Aorta (tissue), 5 donors: ENCODE measurements at regions of chr20 and their contacts with region 1.

Region 1: DNA sequence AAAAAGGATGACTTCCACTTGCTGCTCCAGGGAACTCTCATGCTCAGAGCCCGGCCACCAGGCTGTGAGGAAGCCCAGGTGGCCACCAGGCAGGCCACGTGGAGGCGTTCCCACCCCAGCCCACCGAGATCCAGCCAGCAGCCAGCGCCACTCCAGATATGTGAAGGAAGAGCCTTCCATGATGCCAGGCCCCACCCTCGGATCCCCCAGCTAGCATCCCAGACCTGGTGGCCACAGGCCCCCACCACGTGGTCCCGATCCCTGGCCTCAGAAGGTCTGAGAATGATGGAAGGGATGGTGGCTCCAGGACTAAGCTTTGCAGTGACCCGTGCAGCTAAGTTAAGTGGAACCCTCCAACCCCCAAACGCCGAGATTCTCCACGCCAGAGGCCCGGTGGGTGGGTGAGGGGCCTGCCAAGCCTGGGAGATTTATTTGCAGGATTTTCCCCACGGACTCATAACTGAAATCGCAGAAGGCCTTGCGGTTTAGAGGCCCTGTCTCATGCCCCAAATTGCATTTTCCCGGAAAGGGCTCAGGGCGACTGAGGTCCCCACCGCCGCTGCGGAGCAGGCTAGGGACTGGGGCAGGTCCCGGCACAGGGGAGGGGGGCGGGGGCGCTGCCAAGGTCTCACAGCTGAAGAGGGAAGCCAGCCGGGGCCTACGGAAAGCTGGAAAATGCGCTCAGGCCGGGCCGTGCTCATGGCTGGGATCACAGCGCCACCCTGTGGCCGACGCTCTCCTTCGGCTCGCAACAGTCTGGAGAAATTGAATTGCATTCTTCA is 31.1 kb upstream of the CST7 start:
- DNase-seq: peak; percentile 79 to 90
- ATAC-seq: peak; percentile 94
- H3K4me3 ChIP-seq: no peak overlapping the region
- H3K27ac ChIP-seq: no peak overlapping the region
- H3K4me1 ChIP-seq: no peaks in the 10 kb centered on the region
- H3K27me3 ChIP-seq: no peaks in the 10 kb centered on the region

Region 2: DNA sequence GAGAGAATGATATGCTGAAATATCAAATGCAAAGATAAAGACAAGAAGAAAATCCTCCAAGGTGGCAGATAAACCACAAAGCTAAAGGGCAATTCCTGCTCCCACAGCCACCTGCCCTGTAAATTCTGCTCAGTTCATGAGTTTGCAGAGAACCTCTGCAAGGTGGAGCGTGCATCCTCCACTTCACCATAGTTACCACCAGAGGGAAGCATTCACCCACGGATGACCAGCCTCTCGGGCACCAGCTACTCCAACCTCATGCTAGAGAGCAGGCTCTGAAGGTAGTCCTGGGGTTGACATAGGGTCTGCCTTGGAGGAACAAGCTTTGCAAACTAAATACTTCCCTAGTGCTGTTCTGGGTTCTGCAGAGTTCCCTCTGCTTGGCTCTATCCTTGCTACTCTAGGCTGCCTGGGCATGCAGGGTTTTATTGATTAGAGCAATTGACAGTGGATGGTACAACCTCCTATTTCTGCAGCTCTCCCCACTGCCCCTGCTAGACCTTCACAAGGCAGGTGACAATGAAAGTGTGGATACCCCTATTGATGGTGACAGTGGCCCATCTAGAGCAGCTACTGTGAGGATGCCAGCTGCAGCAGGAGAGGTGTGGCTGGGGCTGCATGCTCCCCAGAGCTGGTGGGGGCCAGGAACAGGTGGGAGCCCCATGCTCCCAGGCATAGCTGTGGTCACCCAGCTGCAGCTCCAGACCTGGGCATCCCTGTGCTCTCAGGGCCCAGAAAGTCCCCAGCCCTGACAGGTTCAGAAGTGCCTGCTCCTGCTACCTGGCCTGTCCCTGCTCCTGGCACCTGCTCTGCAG is 980.5 kb before region 1 on chr20:
- intact Hi-C with region 1: loop called in 1 of 2 experiments (anchors 5 kb)
- DNase-seq: no peak
- ATAC-seq: peak; percentile 81
- H3K4me3 ChIP-seq: no peak overlapping the region
- H3K27ac ChIP-seq: no peak overlapping the region
- H3K4me1 ChIP-seq: no peaks in the 10 kb centered on the region
- H3K27me3 ChIP-seq: peaks cover 0 to 1% of the 10 kb centered on the region in 2 donors

Region 3: DNA sequence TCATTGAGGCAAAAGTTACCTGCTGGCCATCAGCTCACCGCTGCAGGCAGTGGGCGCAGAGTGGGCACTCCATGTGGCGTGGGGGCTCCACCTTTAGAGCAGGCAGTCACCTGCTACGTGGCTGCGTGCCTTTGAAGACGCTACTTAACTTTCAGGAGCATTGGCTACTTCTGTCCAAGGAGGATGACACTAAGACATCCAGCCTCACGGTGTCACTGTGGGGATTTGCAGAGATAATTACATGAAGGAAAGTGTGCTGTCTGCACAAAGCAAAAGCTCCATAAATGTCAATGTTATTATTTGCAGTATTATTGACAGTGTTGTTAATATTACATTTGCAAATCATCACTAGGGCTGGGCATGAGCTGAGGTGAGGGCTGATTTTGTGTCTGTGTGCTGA is 614.6 kb before region 1 on chr20:
- intact Hi-C with region 1: loop called in 1 of 2 experiments (anchors 5 kb)
- DNase-seq: no peak
- ATAC-seq: no peak
- H3K4me3 ChIP-seq: no peak overlapping the region
- H3K27ac ChIP-seq: no peak overlapping the region
- H3K4me1 ChIP-seq: no peaks in the 10 kb centered on the region
- H3K27me3 ChIP-seq: no peaks in the 10 kb centered on the region

Region 4: GRCh38 chr20:25195014-25195961 is 277.3 kb after region 1 on chr20 and contains the start of gene ENTPD6:
- intact Hi-C with region 1: no loop called
- DNase-seq: peak; percentile 95 to 97
- ATAC-seq: peak; percentile 97
- H3K4me3 ChIP-seq: peak within 1 kb of the TSS; percentile 69 to 77
- H3K27ac ChIP-seq: peak within 1 kb of the TSS in 1 of 2 donors; percentile 43
- H3K4me1 ChIP-seq: peaks cover 0 to 3% of the 10 kb centered on the region in 2 donors
- H3K27me3 ChIP-seq: no peaks in the 10 kb centered on the region
- total RNA-seq, gene ENTPD6: 68.8 to 69.8 TPM